ENCODE measurements at regions of chr10 and their contacts with region 1.

Region 1: GRCh38 chr10:99435986-99436638 is 5.7 kb upstream of the GOT1 start:
- DNase-seq: no peak
- CTCF ChIP-seq: peak; percentile 62

Region 2: GRCh38 chr10:99412099-99412498 is 24.0 kb before region 1 on chr10:
- CTCF ChIA-PET with region 1: interaction called, 11 read pairs
- POLR2A ChIA-PET with region 1: no interaction called
- DNase-seq: no peak
- CTCF ChIP-seq: no peak

Region 3: GRCh38 chr10:99450624-99451498 is 14.7 kb after region 1 on chr10:
- CTCF ChIA-PET with region 1: interaction called, 47 read pairs
- POLR2A ChIA-PET with region 1: no interaction called
- DNase-seq: no peak
- CTCF ChIP-seq: no peak

Region 4: GRCh38 chr10:99612167-99612831 is 176.2 kb after region 1 on chr10:
- CTCF ChIA-PET with region 1: interaction called, 64 read pairs
- POLR2A ChIA-PET with region 1: no interaction called
- DNase-seq: peak; percentile 69
- CTCF ChIP-seq: peak; percentile 80